Activated T-helper 1 cell treated with anti-CD3 and anti-CD28 coated beads, Interleukin-12 subunit alpha, Interleukin-12 subunit beta, Interleukin-2, Interleukin-4 antibody, amounts not matched to agents 30 ng/mL and 10 ng/mL and 1 ng/mL, durations not matched to agents 14 hours and 24 hours and 36 hours (primary cell): ENCODE measurements at regions of chr9 and their contacts with region 1.

Region 1: DNA sequence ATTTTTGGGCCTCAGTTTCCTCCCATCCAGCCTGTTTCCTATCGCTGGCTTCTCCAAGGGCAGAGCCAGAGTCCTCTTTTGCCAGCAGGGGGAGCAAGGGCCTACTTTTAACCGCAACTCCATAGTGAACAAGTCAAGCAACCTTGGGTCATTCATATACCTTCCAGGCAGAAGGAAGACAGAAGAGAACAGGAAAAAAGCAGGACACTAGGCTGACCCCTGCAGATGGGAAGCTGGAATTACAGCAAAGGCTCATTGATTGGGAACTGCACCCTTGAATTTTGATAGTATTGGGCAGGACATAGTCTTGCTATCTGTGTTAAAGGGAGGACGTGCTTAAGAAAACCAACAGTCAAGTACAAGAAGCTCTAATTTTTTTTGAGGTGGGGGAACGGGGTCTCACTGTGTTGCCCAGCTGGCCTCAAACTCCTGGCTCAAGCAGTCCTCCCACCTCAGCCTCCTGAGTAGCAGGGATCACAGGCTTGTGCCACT is 30.1 kb downstream of the QRFP start:
- DNase-seq: peak; percentile 25
- H3K4me3 Mint-ChIP-seq: no peak overlapping the region
- H3K27ac Mint-ChIP-seq: no peak overlapping the region
- H3K4me1 Mint-ChIP-seq: peaks cover 4% of the 10 kb centered on the region
- H3K27me3 Mint-ChIP-seq: no peaks in the 10 kb centered on the region

Region 2: GRCh38 chr9:130461218-130461630 is 405.3 kb before region 1 on chr9:
- intact Hi-C with region 1: loop called (anchors 2 kb)
- DNase-seq: peak; percentile 38
- H3K4me3 Mint-ChIP-seq: no peak overlapping the region
- H3K27ac Mint-ChIP-seq: no peak overlapping the region
- H3K4me1 Mint-ChIP-seq: no peaks in the 10 kb centered on the region
- H3K27me3 Mint-ChIP-seq: peaks cover 7% of the 10 kb centered on the region

Region 3: DNA sequence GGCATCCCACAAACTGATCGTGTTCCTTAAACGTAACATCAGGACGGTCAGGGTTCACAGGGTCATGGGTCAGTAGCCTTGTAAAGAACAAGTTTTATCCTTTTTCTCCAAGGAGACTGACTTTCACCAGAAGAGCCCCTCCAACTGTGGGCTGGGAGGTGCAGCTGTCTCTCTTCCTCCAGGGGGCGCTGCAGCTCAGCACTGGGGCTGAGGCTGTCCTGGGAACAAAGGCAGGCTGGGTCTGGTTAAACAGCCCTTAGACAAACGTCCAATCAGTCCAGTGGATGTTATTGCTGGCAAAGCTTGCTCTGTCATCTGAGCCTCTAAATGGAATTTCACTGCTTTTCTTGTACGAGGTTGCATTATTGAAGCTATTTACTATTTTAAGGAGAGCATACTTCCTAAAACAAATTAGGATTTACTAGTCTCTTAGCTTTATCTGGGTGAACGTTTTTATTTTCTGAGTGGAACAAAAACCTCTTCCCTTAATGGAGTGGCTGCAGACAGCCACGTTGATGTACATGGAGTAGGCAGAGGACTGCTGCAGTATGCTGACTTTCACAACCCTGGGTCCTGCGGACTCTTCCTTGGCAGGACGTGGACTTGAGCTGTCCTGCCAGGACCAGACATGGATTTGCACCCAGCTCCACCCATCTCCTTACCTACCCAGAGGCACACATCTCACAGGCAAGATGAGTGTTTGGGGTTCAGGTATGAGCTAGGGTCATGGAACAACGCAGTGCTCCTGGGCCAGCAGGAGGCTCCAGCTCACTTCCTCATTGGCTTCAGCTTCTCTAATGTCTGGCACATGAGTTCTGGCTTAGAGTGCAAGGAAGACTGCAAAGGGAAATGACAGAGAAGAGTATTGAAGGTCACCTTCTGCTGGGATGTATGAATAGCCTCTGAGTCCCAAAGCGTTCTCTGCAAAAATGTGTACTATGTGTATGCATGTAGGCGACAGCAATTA is 165.2 kb before region 1 on chr9:
- intact Hi-C with region 1: loop called (anchors 1 kb)
- DNase-seq: peak; percentile 48
- H3K4me3 Mint-ChIP-seq: no peak overlapping the region
- H3K27ac Mint-ChIP-seq: no peak overlapping the region
- H3K4me1 Mint-ChIP-seq: peaks cover 18% of the 10 kb centered on the region
- H3K27me3 Mint-ChIP-seq: no peaks in the 10 kb centered on the region

Region 4: GRCh38 chr9:130707225-130707976 is 159.1 kb before region 1 on chr9:
- intact Hi-C with region 1: loop called (anchors 1 kb)
- DNase-seq: peak; percentile 52
- H3K4me3 Mint-ChIP-seq: no peak overlapping the region
- H3K27ac Mint-ChIP-seq: peak overlapping the region; percentile 56
- H3K4me1 Mint-ChIP-seq: peaks cover 3% of the 10 kb centered on the region
- H3K27me3 Mint-ChIP-seq: no peaks in the 10 kb centered on the region

Region 5: GRCh38 chr9:130770679-130771442 is 95.7 kb before region 1 on chr9:
- intact Hi-C with region 1: loop called (anchors 1 kb)
- DNase-seq: no peak
- H3K4me3 Mint-ChIP-seq: no peak overlapping the region
- H3K27ac Mint-ChIP-seq: no peak overlapping the region
- H3K4me1 Mint-ChIP-seq: peaks cover 13% of the 10 kb centered on the region
- H3K27me3 Mint-ChIP-seq: peaks cover 3% of the 10 kb centered on the region

Region 6: DNA sequence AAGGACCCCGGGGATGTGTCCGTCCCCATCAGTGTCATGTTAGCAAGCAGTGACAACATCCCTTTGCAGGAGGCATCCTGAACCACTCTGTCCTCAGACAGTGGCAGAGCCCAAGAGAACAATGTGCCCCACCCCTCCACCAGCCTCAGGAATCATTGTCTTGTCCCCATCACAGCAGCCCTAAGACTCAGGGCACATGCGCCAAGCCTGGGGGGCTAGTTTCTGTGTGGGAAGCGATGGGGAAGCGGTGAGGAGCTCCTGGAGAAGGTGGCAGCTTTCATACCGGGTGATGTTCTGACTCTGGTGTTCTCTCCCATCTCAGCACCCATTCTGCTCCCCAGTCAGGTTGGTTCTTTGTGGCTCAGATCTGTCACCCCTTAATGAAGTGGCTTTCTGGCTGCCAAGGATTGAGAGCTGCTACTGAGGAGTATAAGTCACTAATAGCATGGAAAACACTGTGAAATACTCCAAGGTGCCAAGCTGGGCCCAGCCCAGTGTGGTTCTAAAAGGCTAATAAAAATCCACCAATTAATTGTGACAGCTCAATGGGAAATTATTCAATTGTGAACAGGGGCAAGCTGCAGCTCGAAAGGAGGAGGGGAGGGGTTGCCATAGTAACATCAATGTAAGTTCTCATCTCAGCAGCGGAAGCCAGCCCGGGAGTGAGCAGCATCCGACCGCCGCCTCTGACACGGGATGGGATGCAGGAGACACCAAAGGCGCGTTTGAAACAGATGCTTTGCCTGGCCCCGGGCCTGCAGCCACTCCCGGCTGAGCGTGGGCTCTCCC is 25.4 kb after region 1 on chr9:
- intact Hi-C with region 1: no loop called
- DNase-seq: no peak
- H3K4me3 Mint-ChIP-seq: no peak overlapping the region
- H3K27ac Mint-ChIP-seq: no peak overlapping the region
- H3K4me1 Mint-ChIP-seq: no peaks in the 10 kb centered on the region
- H3K27me3 Mint-ChIP-seq: no peaks in the 10 kb centered on the region

Region 7: GRCh38 chr9:130940693-130941576 is 74.4 kb after region 1 on chr9:
- intact Hi-C with region 1: loop called (anchors 1 kb)
- DNase-seq: peak; percentile 58
- H3K4me3 Mint-ChIP-seq: no peak overlapping the region
- H3K27ac Mint-ChIP-seq: no peak overlapping the region
- H3K4me1 Mint-ChIP-seq: peaks cover 4% of the 10 kb centered on the region
- H3K27me3 Mint-ChIP-seq: peaks cover 35% of the 10 kb centered on the region

Region 8: DNA sequence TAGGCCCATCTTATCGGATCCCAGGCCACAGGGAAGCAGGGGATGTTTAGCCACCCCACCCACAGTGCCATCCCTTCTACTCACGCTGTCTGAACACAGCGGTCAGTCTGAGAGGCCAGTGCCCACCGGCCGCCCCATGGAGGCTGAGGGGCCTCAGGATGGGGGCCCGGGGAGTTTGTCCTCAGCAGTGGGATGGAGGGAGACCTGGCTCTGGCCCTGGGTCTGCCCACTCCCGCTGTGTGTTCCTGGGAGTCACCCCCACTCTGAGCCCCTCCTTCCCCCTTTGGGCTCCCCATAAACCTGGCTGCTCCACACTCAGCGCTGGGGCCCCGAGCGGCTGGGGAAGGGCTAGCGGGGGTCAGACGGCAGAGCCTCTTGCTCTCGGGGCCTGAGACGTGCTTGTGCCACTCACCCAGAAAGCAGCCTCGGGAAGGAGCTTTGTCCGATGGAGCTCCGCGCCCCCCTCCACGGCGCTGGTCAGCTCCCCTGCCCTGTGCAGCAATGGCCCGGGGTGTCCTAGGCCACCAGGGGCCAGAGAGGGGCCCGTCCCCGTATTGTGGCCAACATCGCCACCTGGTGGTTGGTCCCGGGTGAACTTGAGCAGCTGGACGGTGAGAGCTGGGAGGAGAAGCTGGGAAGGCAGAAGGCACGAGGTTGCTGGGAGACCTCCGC is 131.5 kb after region 1 on chr9:
- intact Hi-C with region 1: loop called (anchors 2 kb)
- DNase-seq: peak; percentile 14
- H3K4me3 Mint-ChIP-seq: no peak overlapping the region
- H3K27ac Mint-ChIP-seq: no peak overlapping the region
- H3K4me1 Mint-ChIP-seq: no peaks in the 10 kb centered on the region
- H3K27me3 Mint-ChIP-seq: no peaks in the 10 kb centered on the region